Right lobe of liver (tissue), 6 donors: ENCODE measurements at regions of chr18 and their contacts with region 1.

Region 1: GRCh38 chr18:37537868-37538525 is 27.6 kb downstream of the CELF4 start:
- DNase-seq: peak; percentile 74 to 84 (median 81)
- ATAC-seq: peak; percentile 87 to 97 (median 93)
- H3K4me3 ChIP-seq: no peak overlapping the region
- H3K27ac ChIP-seq: no peak overlapping the region
- H3K4me1 ChIP-seq: no peaks in the 10 kb centered on the region
- H3K27me3 ChIP-seq: peaks cover 0 to 12% of the 10 kb centered on the region in 2 donors
- CTCF ChIP-seq: peak; percentile 77 to 83 (median 82)
- POLR2A ChIP-seq: no peak

Region 2: DNA sequence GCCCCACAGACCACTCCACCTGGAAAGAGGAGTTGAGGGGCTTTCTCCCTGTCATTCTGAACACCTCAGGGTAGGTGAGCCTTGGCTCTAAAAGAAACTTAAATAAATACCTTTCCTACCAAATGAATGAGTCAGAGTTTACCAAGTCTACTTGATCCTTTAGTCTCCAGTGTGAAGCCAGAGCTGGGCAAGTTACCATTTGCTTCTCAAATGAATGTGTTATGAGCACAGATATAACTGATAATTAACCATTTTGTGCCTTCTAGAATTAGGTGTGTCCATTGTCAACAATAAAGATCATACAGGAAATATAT is 361.4 kb before region 1 on chr18:
- intact Hi-C with region 1: no loop called
- DNase-seq: no peak
- ATAC-seq: no peak
- H3K4me3 ChIP-seq: no peak overlapping the region
- H3K27ac ChIP-seq: no peak overlapping the region
- H3K4me1 ChIP-seq: no peaks in the 10 kb centered on the region
- H3K27me3 ChIP-seq: no peaks in the 10 kb centered on the region
- CTCF ChIP-seq: no peak
- POLR2A ChIP-seq: no peak

Region 3: GRCh38 chr18:37385846-37386778 is 151.9 kb before region 1 on chr18:
- intact Hi-C with region 1: loop called (anchors 5 kb)
- DNase-seq: no peak
- ATAC-seq: peak in 2 of 4 donors; percentile 32 to 38
- H3K4me3 ChIP-seq: no peak overlapping the region
- H3K27ac ChIP-seq: no peak overlapping the region
- H3K4me1 ChIP-seq: no peaks in the 10 kb centered on the region
- H3K27me3 ChIP-seq: no peaks in the 10 kb centered on the region
- CTCF ChIP-seq: peak; percentile 57 to 78 (median 66)
- POLR2A ChIP-seq: no peak

Region 4: GRCh38 chr18:37403100-37403781 is 134.8 kb before region 1 on chr18:
- intact Hi-C with region 1: no loop called
- DNase-seq: no peak
- ATAC-seq: no peak
- H3K4me3 ChIP-seq: no peak overlapping the region
- H3K27ac ChIP-seq: no peak overlapping the region
- H3K4me1 ChIP-seq: no peaks in the 10 kb centered on the region
- H3K27me3 ChIP-seq: no peaks in the 10 kb centered on the region
- CTCF ChIP-seq: no peak
- POLR2A ChIP-seq: no peak

Region 5: GRCh38 chr18:37445368-37445767 is 92.6 kb before region 1 on chr18:
- intact Hi-C with region 1: loop called (anchors 5 to 10 kb)
- DNase-seq: no peak
- ATAC-seq: no peak
- H3K4me3 ChIP-seq: no peak overlapping the region
- H3K27ac ChIP-seq: no peak overlapping the region
- H3K4me1 ChIP-seq: no peaks in the 10 kb centered on the region
- H3K27me3 ChIP-seq: no peaks in the 10 kb centered on the region
- CTCF ChIP-seq: no peak
- POLR2A ChIP-seq: no peak

Region 6: GRCh38 chr18:37484983-37485834 is 52.8 kb before region 1 on chr18:
- intact Hi-C with region 1: loop called in 1 of 2 experiments (anchors 10 kb)
- DNase-seq: peak in 1 of 3 donors; percentile 50
- ATAC-seq: peak; percentile 18 to 67 (median 45)
- H3K4me3 ChIP-seq: no peak overlapping the region
- H3K27ac ChIP-seq: no peak overlapping the region
- H3K4me1 ChIP-seq: no peaks in the 10 kb centered on the region
- H3K27me3 ChIP-seq: no peaks in the 10 kb centered on the region
- CTCF ChIP-seq: peak in 3 of 4 donors; percentile 1 to 45 (median 15)
- POLR2A ChIP-seq: no peak